Activated T-helper 1 cell treated with anti-CD3 and anti-CD28 coated beads, Interleukin-12 subunit alpha, Interleukin-12 subunit beta, Interleukin-2, Interleukin-4 antibody, amounts not matched to agents 30 ng/mL and 10 ng/mL and 1 ng/mL, durations not matched to agents 14 hours and 24 hours and 36 hours (primary cell): ENCODE measurements at regions of chr13 and their contacts with region 1.

Region 1: GRCh38 chr13:112062571-112063570 is 4.1 kb upstream of the SOX1 start:
- DNase-seq: no peak
- H3K4me3 Mint-ChIP-seq: no peak overlapping the region
- H3K27ac Mint-ChIP-seq: peak overlapping the region; percentile 83
- H3K4me1 Mint-ChIP-seq: no peaks in the 10 kb centered on the region
- H3K27me3 Mint-ChIP-seq: peaks cover 69% of the 10 kb centered on the region

Region 2: DNA sequence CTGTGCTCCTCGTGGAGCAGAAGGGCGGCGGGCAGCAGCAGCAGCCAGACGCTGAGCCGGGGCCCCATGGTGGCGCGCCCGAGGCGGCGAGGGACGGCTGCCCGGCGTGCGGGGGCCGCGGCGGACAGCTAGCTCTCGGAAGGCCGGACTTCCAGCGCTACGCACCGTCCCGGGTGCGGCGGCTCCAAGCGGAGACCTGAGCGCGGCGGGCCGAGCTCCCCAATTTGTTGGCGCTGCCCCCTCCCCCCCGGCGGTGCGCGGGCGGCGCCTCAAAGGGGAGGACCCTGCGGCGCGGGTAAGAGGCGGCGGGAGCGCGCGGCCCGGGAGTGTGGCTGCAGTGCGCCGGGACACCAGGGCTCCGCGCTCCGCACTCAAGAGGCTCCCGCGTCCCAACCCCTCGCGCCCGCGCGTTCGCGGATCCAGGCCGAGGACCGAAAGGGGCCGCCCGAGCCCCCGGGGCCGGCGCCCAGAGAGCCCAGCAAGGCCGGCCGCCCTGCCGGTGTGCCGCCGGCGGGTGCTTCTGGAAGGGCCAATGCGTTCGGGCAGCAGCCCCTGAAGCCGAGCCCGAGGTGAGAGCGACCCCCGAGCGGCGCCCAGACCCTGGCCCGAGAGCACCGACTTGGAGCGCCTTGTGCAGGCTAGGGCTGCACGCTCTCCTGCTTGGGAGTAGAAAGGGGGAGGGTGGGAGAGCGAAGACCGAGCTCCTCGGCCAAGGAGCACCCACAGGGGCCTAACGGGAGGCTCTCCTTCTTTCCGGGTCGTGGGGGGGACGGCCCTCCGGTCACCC is 1755.7 kb before region 1 on chr13 and contains the starts of genes COL4A1 and COL4A2:
- intact Hi-C with region 1: loop called (anchors 5 kb)
- DNase-seq: no peak
- H3K4me3 Mint-ChIP-seq: no peak within 1 kb of the TSS
- H3K27ac Mint-ChIP-seq: peak within 1 kb of the TSS; percentile 78
- H3K4me1 Mint-ChIP-seq: peaks cover 15% of the 10 kb centered on the region
- H3K27me3 Mint-ChIP-seq: peaks cover 74% of the 10 kb centered on the region
- total RNA-seq, gene COL4A1: not detected in 2 replicates
- total RNA-seq, gene COL4A2: 0.10 TPM in 1 of 2 replicates, not detected in the other

Region 3: DNA sequence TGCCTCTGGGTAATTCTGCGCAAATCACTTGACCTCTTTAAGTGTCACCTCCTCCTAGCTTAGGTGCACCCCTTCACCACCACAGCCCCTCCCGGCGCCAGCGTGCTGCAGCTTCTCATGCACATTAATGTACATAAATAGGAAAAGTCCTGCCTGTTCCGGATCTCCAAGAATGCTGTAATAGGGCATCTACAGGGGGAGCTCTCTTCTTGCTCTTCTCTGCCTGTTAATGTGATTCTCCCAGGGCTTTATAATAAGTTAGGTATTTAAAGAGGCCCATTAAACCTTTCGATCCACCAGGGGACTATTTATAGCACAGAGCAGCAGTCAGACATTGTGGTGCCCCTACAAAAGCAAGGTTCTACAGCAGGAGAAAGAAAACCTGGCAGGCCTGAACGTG is 39.4 kb after region 1 on chr13:
- intact Hi-C with region 1: loop called (anchors 10 kb)
- DNase-seq: no peak
- H3K4me3 Mint-ChIP-seq: no peak overlapping the region
- H3K27ac Mint-ChIP-seq: no peak overlapping the region
- H3K4me1 Mint-ChIP-seq: no peaks in the 10 kb centered on the region
- H3K27me3 Mint-ChIP-seq: peaks cover 33% of the 10 kb centered on the region